ENCODE measurements at regions of chr16 and their contacts with region 1.

Region 1: DNA sequence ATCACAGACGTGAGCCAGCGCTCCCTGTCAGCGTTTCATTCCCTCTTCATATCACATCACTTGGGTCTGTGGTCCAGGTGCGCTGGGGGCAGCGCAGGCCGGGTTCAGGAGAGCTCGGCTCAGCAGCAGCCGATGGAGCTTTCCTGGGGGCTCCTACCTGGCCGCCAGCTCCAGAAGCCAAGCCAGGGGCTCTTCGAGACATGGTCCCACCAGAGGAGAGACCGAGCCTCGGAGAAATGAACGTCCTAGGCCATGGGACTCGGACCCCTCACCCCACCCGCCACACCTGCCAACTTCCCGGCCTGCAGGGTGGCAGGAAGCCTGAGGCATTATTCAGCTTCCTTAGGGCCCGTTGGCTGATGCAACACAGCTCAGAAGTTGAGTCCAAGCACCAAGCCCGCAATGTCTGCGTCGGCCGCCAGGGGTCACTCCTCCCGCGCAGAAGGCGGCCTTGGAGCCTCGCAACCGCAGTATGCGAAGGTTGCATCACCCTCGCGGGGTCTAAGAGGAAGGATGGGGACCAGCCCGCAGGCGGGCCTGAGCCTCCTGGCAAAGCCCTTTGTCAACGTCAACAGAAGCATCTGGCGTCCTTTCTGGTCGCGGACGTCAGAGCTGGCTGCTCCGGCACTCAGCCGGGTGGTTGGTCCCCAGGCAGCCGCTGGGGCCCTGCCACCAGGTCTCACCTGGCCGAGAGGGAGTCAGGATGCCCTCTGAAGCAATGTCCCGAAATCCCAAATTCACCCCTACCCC is 13.2 kb upstream of the KLHDC4 start:
- DNase-seq: peak; percentile 99 to 100 (median 99)
- H3K4me3 ChIP-seq: peak overlapping the region in 2 of 7 experiments; percentile 18 to 19
- H3K27ac ChIP-seq: peak overlapping the region; percentile 59 to 89
- H3K4me1 ChIP-seq: peaks cover 0 to 46% (median 32%) of the 10 kb centered on the region in 4 experiments
- H3K27me3 ChIP-seq: no peaks in the 10 kb centered on the region

Region 2: GRCh38 chr16:87790278-87791032 is 11.4 kb after region 1 on chr16:
- CTCF ChIA-PET with region 1: interaction called, 13 read pairs
- POLR2A ChIA-PET with region 1: no interaction called
- DNase-seq: no peak
- H3K4me3 ChIP-seq: no peak overlapping the region
- H3K27ac ChIP-seq: no peak overlapping the region
- H3K4me1 ChIP-seq: peaks cover 0 to under 1% (median 0%) of the 10 kb centered on the region in 4 experiments
- H3K27me3 ChIP-seq: no peaks in the 10 kb centered on the region

Region 3: DNA sequence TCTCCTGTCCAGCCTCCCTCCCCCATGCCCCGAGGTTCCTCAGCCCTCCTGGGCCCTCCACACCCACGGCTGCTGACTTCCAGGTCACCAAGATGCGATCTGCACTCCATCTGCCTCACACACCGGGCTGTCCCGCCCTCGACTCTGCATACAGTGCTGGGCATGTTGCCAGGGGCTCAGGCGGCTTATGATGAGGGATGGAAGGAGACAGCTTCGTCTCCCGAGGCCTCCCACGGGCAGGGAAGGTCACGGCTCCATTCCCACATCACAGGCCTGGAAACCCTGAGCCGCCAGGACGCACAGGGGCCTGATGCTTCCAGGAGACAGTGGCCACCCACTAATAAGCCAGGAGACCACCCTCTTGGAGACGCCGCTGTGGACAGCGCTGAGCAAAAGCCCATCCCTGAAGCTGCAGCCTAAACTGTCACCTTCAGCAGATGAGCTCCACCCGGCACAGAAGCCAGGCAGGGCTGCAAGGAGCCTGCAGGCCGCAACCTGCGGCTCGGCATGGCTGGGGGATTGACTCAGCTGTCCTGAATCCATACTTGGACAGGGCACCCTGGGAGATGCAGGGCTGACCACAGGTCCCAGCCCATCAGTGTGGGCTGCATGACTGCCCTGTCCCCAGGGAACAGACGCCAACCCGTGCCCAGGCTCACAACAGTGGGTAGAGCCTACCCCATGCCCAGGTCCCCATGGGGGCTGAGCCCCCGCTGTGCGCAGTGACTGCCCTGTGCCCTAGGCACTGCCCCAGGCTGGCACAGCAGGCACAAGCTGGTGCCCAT is 55.8 kb after region 1 on chr16:
- CTCF ChIA-PET with region 1: interaction called, 20 read pairs
- POLR2A ChIA-PET with region 1: interaction called, 4 read pairs
- DNase-seq: no peak
- H3K4me3 ChIP-seq: no peak overlapping the region
- H3K27ac ChIP-seq: no peak overlapping the region
- H3K4me1 ChIP-seq: peaks cover 0 to 11% (median 4%) of the 10 kb centered on the region in 4 experiments
- H3K27me3 ChIP-seq: no peaks in the 10 kb centered on the region

Region 4: GRCh38 chr16:87864331-87864989 is 85.5 kb after region 1 on chr16:
- CTCF ChIA-PET with region 1: interaction called, 155 read pairs
- POLR2A ChIA-PET with region 1: interaction called, 18 read pairs
- DNase-seq: no peak
- H3K4me3 ChIP-seq: no peak overlapping the region
- H3K27ac ChIP-seq: no peak overlapping the region
- H3K4me1 ChIP-seq: peaks cover 0 to 52% (median 27%) of the 10 kb centered on the region in 4 experiments
- H3K27me3 ChIP-seq: no peaks in the 10 kb centered on the region